Activated CD8-positive, alpha-beta T cell treated with anti-CD3 and anti-CD28 coated beads, Interleukin-2, amount 10 ng/mL, durations not matched to agents 7 days and 5 days (primary cell): ENCODE measurements at regions of chr6 and their contacts with region 1.

Region 1: DNA sequence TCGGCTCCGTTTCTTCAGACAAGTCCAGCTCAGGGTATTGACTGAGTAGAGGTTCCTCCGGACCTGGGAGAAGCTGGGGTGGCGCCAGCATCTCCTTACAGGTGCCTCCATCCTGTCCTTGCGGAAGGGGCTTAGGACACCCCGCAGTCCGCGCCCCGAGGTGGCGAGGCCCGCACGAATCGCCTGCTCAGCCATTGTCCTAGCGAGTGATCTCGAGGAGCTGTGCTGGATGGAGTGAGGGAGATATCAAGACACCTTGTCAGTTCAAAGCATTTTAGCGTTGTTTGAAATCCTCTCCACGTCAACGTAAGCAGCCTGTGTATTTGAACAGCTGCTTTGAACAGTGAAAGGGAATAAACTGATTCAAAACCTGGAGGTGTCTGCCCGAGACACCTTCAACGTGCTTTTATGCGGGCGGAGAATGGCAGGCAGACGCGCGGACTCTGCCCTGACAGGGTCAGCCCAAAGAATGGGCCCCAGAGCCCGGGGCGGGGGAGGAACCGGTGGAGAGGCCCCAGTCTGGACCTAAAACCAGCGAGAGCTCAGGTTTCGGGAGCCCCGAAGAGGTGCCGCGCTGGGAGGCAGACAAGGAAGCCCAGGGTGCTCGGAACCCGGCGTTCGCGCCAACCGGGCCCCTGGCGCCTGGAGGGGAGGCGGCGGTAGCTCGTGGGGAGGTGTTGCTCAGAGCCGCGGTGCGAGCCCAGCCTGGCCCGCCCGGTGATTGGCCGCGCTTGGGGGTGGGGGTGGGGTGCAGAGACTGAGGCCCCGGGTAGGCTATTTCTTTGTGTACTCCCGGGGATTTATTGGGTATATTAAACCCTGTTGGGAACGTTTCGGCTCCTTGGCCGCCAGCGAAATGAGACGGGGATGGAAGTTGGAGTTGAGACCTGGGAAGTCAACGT is 3.1 kb upstream of the POU3F2 start:
- DNase-seq: no peak
- ATAC-seq: no peak
- H3K4me3 Mint-ChIP-seq: peak overlapping the region; percentile 40
- H3K27ac Mint-ChIP-seq: no peak overlapping the region
- H3K4me1 Mint-ChIP-seq: peaks cover 45% of the 10 kb centered on the region
- H3K27me3 Mint-ChIP-seq: peaks cover 79% of the 10 kb centered on the region

Region 2: GRCh38 chr6:98845211-98846020 is 14.1 kb after region 1 on chr6:
- CTCF ChIA-PET with region 1: interaction called, 12 read pairs
- POLR2A ChIA-PET with region 1: no interaction called
- DNase-seq: peak; percentile 71
- ATAC-seq: peak; percentile 53
- H3K4me3 Mint-ChIP-seq: no peak overlapping the region
- H3K27ac Mint-ChIP-seq: no peak overlapping the region
- H3K4me1 Mint-ChIP-seq: peaks cover 15% of the 10 kb centered on the region
- H3K27me3 Mint-ChIP-seq: peaks cover 79% of the 10 kb centered on the region